ENCODE measurements at regions of chr1 and their contacts with region 1.

Region 1: GRCh38 chr1:36553591-36554322 is 71.0 kb upstream of the CSF3R start:
- DNase-seq: peak; percentile 92
- ATAC-seq: peak; percentile 100
- H3K4me3 Mint-ChIP-seq: no peak overlapping the region
- H3K27ac Mint-ChIP-seq: no peak overlapping the region
- H3K4me1 Mint-ChIP-seq: no peaks in the 10 kb centered on the region
- H3K27me3 Mint-ChIP-seq: peaks cover 31% of the 10 kb centered on the region
- CTCF ChIP-seq: peak; percentile 77

Region 2: GRCh38 chr1:36542962-36543515 is 10.7 kb before region 1 on chr1:
- CTCF ChIA-PET with region 1: interaction called, 11 read pairs
- POLR2A ChIA-PET with region 1: no interaction called
- DNase-seq: peak; percentile 50
- ATAC-seq: peak; percentile 96
- H3K4me3 Mint-ChIP-seq: no peak overlapping the region
- H3K27ac Mint-ChIP-seq: no peak overlapping the region
- H3K4me1 Mint-ChIP-seq: no peaks in the 10 kb centered on the region
- H3K27me3 Mint-ChIP-seq: peaks cover 12% of the 10 kb centered on the region
- CTCF ChIP-seq: no peak

Region 3: GRCh38 chr1:37974567-37974966 is 1420.8 kb after region 1 on chr1:
- CTCF ChIA-PET with region 1: no interaction called
- POLR2A ChIA-PET with region 1: no interaction called
- DNase-seq: no peak
- ATAC-seq: no peak
- H3K4me3 Mint-ChIP-seq: no peak overlapping the region
- H3K27ac Mint-ChIP-seq: no peak overlapping the region
- H3K4me1 Mint-ChIP-seq: no peaks in the 10 kb centered on the region
- H3K27me3 Mint-ChIP-seq: no peaks in the 10 kb centered on the region
- CTCF ChIP-seq: no peak